Activated CD4-positive, alpha-beta T cell treated with anti-CD3 and anti-CD28 coated beads for 36 hours (primary cell): ENCODE measurements at regions of chr13 and their contacts with region 1.

Region 1: GRCh38 chr13:99386911-99387788 is 80.0 kb upstream of the GPR183 start:
- DNase-seq: peak; percentile 94
- ATAC-seq: peak; percentile 62
- H3K4me3 Mint-ChIP-seq: no peak overlapping the region
- H3K27ac Mint-ChIP-seq: peak overlapping the region; percentile 76
- H3K4me1 Mint-ChIP-seq: peaks cover 63% of the 10 kb centered on the region
- H3K27me3 Mint-ChIP-seq: no peaks in the 10 kb centered on the region

Region 2: DNA sequence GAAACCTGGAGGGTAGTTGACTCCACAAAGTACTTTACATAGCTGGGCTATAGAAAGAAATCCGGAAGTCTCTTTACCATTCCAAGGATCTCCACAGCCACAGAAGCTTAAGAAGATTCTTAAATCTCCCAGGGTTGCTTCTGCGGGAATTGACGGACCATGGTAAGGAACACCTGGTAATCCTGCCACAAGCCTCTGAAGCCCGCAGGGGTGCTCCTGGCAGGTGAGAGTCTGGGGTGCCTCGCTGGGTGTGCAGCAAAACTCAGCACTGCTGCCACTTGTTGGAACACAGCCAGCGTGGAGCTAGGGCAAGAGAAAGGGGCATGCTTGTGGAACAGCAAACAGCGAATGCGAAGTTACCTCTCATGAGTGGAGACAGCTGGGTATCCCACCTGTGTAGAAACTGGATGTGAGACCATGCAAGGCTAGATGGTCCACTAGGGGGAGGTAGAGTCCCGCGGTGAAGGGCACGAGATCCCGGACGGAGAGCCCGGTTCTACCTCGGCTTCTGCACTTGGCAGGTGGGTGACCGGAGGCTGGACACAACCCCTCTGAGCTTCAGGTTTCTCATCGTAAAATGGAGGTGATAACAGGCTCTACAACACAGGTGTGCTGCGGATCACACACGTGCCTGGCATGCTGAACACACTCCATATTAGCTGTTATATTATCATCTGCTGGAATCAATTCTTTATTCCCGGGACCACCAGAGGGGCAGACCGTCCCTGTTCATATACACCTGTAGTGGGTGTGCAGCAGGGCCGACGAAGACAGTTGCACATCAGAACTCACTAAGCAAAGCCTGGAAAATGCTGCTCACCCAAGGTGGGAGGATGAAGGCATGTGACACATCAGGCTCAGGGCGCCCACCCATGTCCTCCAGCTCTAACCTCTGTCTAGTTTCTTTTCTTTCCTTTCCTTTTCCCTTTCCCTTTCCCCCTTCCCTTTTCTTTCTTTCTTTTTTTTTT is 210.6 kb before region 1 on chr13:
- CTCF ChIA-PET with region 1: interaction called, 10 read pairs
- POLR2A ChIA-PET with region 1: no interaction called
- intact Hi-C with region 1: loop called in 1 of 2 experiments (anchors 2 kb)
- DNase-seq: peak; percentile 86
- ATAC-seq: peak; percentile 91
- H3K4me3 Mint-ChIP-seq: peak overlapping the region; percentile 51
- H3K27ac Mint-ChIP-seq: no peak overlapping the region
- H3K4me1 Mint-ChIP-seq: peaks cover 41% of the 10 kb centered on the region
- H3K27me3 Mint-ChIP-seq: no peaks in the 10 kb centered on the region

Region 3: GRCh38 chr13:99228737-99229691 is 158.1 kb before region 1 on chr13:
- CTCF ChIA-PET with region 1: no interaction called
- POLR2A ChIA-PET with region 1: no interaction called
- intact Hi-C with region 1: no loop called
- DNase-seq: no peak
- ATAC-seq: peak; percentile 67
- H3K4me3 Mint-ChIP-seq: peak overlapping the region; percentile 51
- H3K27ac Mint-ChIP-seq: peak overlapping the region; percentile 89
- H3K4me1 Mint-ChIP-seq: peaks cover 81% of the 10 kb centered on the region
- H3K27me3 Mint-ChIP-seq: no peaks in the 10 kb centered on the region

Region 4: GRCh38 chr13:99322297-99323103 is 64.7 kb before region 1 on chr13:
- CTCF ChIA-PET with region 1: interaction called, 16 read pairs
- POLR2A ChIA-PET with region 1: interaction called, 6 read pairs
- intact Hi-C with region 1: loop called in 1 of 2 experiments (anchors 1 kb)
- DNase-seq: peak; percentile 66
- ATAC-seq: peak; percentile 78
- H3K4me3 Mint-ChIP-seq: peak overlapping the region; percentile 26
- H3K27ac Mint-ChIP-seq: peak overlapping the region; percentile 93
- H3K4me1 Mint-ChIP-seq: peaks cover 81% of the 10 kb centered on the region
- H3K27me3 Mint-ChIP-seq: no peaks in the 10 kb centered on the region

Region 5: GRCh38 chr13:99404005-99404755 is 17.0 kb after region 1 on chr13:
- CTCF ChIA-PET with region 1: interaction called, 14 read pairs
- POLR2A ChIA-PET with region 1: no interaction called
- intact Hi-C with region 1: no loop called
- DNase-seq: peak; percentile 31
- ATAC-seq: peak; percentile 59
- H3K4me3 Mint-ChIP-seq: no peak overlapping the region
- H3K27ac Mint-ChIP-seq: peak overlapping the region; percentile 61
- H3K4me1 Mint-ChIP-seq: peaks cover 59% of the 10 kb centered on the region
- H3K27me3 Mint-ChIP-seq: no peaks in the 10 kb centered on the region

Region 6: GRCh38 chr13:99425485-99426341 is 38.6 kb after region 1 on chr13:
- CTCF ChIA-PET with region 1: interaction called, 14 read pairs
- POLR2A ChIA-PET with region 1: no interaction called
- intact Hi-C with region 1: no loop called
- DNase-seq: peak; percentile 80
- ATAC-seq: peak; percentile 37
- H3K4me3 Mint-ChIP-seq: peak overlapping the region; percentile 65
- H3K27ac Mint-ChIP-seq: peak overlapping the region; percentile 93
- H3K4me1 Mint-ChIP-seq: peaks cover 67% of the 10 kb centered on the region
- H3K27me3 Mint-ChIP-seq: no peaks in the 10 kb centered on the region